ENCODE measurements at regions of chr3 and their contacts with region 1.

Region 1: DNA sequence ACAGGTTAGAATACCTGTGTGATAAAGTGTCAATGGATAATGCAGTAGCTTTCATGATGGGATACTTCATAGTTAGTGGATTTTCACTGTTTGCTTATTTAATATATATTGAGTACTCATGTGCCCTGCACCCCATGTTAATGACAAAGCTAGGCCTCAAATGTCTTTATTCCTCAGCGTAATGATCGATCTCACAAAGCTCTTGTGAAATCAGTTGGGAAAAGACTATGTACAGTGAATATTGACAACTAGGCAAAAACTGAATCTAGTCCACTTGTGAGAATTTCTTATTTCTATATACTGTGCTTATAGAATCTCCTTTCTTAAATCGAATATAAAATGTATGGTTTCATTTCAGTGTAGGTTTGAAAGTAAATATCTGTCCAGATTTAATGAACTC is 17.9 kb downstream of the SMC4 start:
- DNase-seq: no peak
- H3K4me3 ChIP-seq: no peak overlapping the region
- H3K27ac ChIP-seq: no peak overlapping the region
- H3K4me1 ChIP-seq: no peaks in the 10 kb centered on the region
- H3K27me3 ChIP-seq: no peaks in the 10 kb centered on the region
- CTCF ChIP-seq: no peak
- POLR2A ChIP-seq: no peak

Region 2: GRCh38 chr3:159897331-159898075 is 519.8 kb before region 1 on chr3:
- intact Hi-C with region 1: loop called (anchors 5 kb)
- DNase-seq: no peak
- H3K4me3 ChIP-seq: no peak overlapping the region
- H3K27ac ChIP-seq: peak overlapping the region; percentile 6 to 35
- H3K4me1 ChIP-seq: peaks cover 0 to under 1% of the 10 kb centered on the region in 2 donors
- H3K27me3 ChIP-seq: no peaks in the 10 kb centered on the region
- CTCF ChIP-seq: no peak
- POLR2A ChIP-seq: no peak

Region 3: DNA sequence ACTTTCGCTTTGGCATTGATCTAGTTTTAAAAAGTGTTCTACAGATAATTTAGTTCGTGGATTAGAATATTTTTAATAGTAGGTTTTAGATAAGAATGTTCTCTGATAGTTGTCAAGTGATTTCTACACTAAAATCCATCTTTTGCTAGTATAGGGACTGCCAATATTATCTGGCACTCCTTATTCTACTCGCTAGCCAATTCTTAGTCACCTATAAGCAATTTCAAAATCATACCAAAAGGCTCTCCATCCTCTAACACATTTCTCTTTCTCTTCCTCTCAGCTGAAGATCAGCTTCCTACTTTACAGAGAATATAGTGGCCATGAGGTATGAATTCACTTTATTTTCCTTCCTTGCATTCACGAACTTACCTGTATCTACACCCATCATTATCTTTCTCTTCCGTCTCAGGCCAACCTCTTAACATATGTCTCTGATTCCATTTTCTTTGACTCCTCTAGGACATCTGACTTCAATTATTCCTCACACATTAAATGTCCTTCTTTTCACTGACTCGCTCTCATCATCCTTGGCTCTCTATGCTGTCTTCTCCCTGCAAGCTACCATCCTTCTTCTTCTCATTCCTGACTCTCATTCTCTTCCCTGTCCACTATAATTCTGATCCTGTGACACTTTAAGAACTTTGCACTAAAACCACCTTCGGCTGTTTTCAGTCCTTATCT is 156.6 kb before region 1 on chr3:
- intact Hi-C with region 1: no loop called
- DNase-seq: no peak
- H3K4me3 ChIP-seq: peak overlapping the region in 2 of 3 donors; percentile 3 to 13
- H3K27ac ChIP-seq: peak overlapping the region in 1 of 2 donors; percentile 27
- H3K4me1 ChIP-seq: no peaks in the 10 kb centered on the region
- H3K27me3 ChIP-seq: no peaks in the 10 kb centered on the region
- CTCF ChIP-seq: no peak
- POLR2A ChIP-seq: no peak

Region 4: DNA sequence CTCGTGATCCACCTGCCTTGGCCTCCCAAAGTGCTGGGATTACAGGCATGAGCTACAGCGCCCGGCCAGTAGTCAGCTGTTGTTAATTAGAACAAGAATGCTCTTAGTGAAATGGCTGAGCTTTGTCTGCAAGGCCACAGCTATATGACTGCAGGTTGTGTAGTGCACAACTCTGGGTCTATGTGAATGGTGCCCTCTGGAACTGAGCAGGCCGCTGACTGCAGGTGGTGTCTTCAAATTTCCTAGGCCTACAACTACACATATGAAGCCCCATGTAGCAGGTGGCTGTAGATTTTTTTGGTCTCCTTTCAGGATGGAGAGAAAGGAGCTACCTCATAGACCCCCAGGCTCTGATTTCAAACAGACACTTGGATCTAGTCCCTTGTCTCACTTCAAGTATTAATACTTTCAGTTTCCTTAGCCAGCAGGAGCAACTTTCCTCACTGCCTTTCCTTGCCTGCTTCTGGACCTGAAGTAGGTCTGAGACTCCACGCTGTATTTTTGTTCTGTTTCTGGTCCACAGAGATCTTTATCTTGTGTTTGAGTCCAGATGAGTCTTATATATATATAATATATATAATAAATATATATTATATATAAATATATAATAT is 105.2 kb before region 1 on chr3:
- intact Hi-C with region 1: no loop called
- DNase-seq: no peak
- H3K4me3 ChIP-seq: no peak overlapping the region
- H3K27ac ChIP-seq: no peak overlapping the region
- H3K4me1 ChIP-seq: no peaks in the 10 kb centered on the region
- H3K27me3 ChIP-seq: no peaks in the 10 kb centered on the region
- CTCF ChIP-seq: no peak
- POLR2A ChIP-seq: no peak

Region 5: GRCh38 chr3:160622263-160623045 is 205.1 kb after region 1 on chr3:
- intact Hi-C with region 1: no loop called
- DNase-seq: no peak
- H3K4me3 ChIP-seq: no peak overlapping the region
- H3K27ac ChIP-seq: no peak overlapping the region
- H3K4me1 ChIP-seq: no peaks in the 10 kb centered on the region
- H3K27me3 ChIP-seq: no peaks in the 10 kb centered on the region
- CTCF ChIP-seq: no peak
- POLR2A ChIP-seq: no peak